K562 (cell line): ENCODE measurements at regions of chr18 and their contacts with region 1.

Region 1: GRCh38 chr18:10787293-10787901 is 261.6 kb downstream of the NAPG start:
- DNase-seq: peak; percentile 64 to 88 (median 68)
- ATAC-seq: peak; percentile 91
- H3K4me3 ChIP-seq: no peak overlapping the region
- H3K27ac ChIP-seq: no peak overlapping the region
- H3K4me1 ChIP-seq: no peaks in the 10 kb centered on the region; a peak in 1 of 5 replicates
- H3K27me3 ChIP-seq: no peaks in the 10 kb centered on the region
- CTCF ChIP-seq: peak; percentile 79 to 95 (median 91)
- EP300 ChIP-seq: no peak
- POLR2A ChIP-seq: no peak
- RAD21 ChIP-seq: peak; percentile 74 to 78

Region 2: GRCh38 chr18:10560450-10561045 is 226.8 kb before region 1 on chr18:
- CTCF ChIA-PET with region 1: interaction called, 4 read pairs
- POLR2A ChIA-PET with region 1: no interaction called
- in situ Hi-C with region 1: no loop called
- intact Hi-C with region 1: loop called (anchors 10 kb)
- DNase-seq: peak; percentile 73 to 85 (median 82)
- ATAC-seq: peak; percentile 89
- H3K4me3 ChIP-seq: no peak overlapping the region
- H3K27ac ChIP-seq: no peak overlapping the region
- H3K4me1 ChIP-seq: peaks cover 11 to 15% of the 10 kb centered on the region in 2 experiments
- H3K27me3 ChIP-seq: no peaks in the 10 kb centered on the region
- CTCF ChIP-seq: peak; percentile 79 to 87 (median 85)
- EP300 ChIP-seq: no peak
- POLR2A ChIP-seq: no peak
- RAD21 ChIP-seq: peak; percentile 90 to 95

Region 3: DNA sequence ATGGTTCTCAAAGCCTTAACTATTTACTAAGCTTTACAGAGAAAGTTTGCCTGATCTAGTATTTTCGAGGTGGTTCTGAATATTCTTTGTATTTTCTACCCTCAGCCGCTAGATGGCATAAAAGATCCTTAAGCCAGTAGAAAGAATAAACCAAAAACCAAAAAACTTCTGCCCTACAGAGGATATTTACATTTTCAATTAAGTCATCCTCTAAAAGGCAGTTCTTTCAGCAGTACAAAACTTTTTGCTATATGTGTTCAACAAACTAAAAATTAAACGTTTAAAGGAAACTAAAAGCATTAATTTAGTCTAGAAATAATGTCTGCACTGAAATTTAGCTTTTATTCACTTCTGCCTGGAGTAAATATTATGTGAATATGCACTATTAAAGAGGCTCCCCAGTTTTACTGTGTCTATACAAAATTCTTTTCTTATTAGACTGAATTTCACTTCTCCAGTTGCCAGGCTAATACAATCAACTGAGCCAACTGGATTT is 64.5 kb after region 1 on chr18:
- CTCF ChIA-PET with region 1: no interaction called
- POLR2A ChIA-PET with region 1: no interaction called
- in situ Hi-C with region 1: no loop called
- intact Hi-C with region 1: loop called (anchors 1 kb)
- DNase-seq: peak; percentile 44 to 70 (median 56)
- ATAC-seq: peak; percentile 69
- H3K4me3 ChIP-seq: no peak overlapping the region
- H3K27ac ChIP-seq: peak overlapping the region; percentile 6; the same call in 2 of the 3 replicates
- H3K4me1 ChIP-seq: no peaks in the 10 kb centered on the region
- H3K27me3 ChIP-seq: peaks cover 0 to 5% of the 10 kb centered on the region in 2 experiments; a peak in 1 of 5 replicates
- CTCF ChIP-seq: peak; percentile 61 to 89 (median 66); a peak in 5 of 6 replicates
- EP300 ChIP-seq: no peak; the same call in 1 of the 2 replicates
- POLR2A ChIP-seq: no peak
- RAD21 ChIP-seq: peak; percentile 84 to 90

Region 4: GRCh38 chr18:11040823-11041656 is 253.6 kb after region 1 on chr18:
- CTCF ChIA-PET with region 1: no interaction called
- POLR2A ChIA-PET with region 1: interaction called, 3 read pairs
- in situ Hi-C with region 1: no loop called
- intact Hi-C with region 1: loop called (anchors 5 kb)
- DNase-seq: peak; percentile 40 to 47 (median 42)
- ATAC-seq: peak; percentile 76
- H3K4me3 ChIP-seq: no peak overlapping the region
- H3K27ac ChIP-seq: no peak overlapping the region
- H3K4me1 ChIP-seq: no peaks in the 10 kb centered on the region
- H3K27me3 ChIP-seq: no peaks in the 10 kb centered on the region
- CTCF ChIP-seq: peak; percentile 54 to 69 (median 57)
- EP300 ChIP-seq: no peak
- POLR2A ChIP-seq: no peak
- RAD21 ChIP-seq: peak; percentile 37 to 50

Region 5: DNA sequence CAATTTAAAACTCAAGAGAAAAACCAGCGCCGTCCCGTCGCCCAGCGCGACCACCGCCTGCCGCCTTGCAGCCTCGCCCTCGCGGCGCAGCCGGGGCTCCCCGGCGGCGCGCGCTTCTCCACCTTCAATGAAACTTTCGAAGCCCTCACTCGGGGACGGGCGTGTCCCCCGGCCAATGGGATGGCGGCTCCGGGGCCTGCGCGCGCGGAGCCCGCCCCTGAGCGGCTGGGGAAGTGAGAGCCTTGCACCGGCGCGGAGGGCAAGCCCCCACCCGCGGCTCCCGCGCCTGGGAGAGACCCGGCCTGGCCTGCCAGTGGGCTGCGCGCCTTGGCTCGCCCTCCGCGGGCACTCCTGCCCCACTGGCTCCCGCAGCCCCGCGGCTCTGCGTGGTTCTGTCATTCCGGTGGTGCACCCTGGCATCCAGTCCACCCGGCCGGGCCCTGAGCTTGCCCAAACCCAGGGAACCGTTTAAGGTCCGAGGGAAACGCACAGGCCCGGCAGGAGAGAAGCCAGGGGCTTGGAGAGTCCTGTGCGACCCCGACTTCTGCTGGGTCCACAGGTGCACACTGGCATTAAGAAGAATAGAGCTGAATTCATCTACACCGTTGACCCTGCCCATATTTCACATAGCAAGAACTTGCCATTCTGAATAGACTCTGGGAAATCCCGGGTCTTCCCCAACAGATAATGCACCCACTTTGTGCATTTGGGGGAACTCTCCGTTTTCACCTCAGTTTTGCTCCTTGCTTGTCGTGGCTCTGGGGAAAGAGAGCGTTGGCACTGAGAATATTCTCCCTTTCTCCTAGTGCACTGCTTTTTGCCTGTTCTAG is 362.3 kb after region 1 on chr18 and contains the start of gene PIEZO2:
- CTCF ChIA-PET with region 1: no interaction called
- POLR2A ChIA-PET with region 1: no interaction called
- in situ Hi-C with region 1: no loop called
- intact Hi-C with region 1: loop called (anchors 5 kb)
- DNase-seq: peak; percentile 2 to 36 (median 26)
- ATAC-seq: peak; percentile 38; the same call in 1 of the 3 replicates
- H3K4me3 ChIP-seq: no peak within 1 kb of the TSS
- H3K27ac ChIP-seq: no peak within 1 kb of the TSS
- H3K4me1 ChIP-seq: peaks cover 0 to 4% of the 10 kb centered on the region in 2 experiments; a peak in 1 of 5 replicates
- H3K27me3 ChIP-seq: peaks cover 6 to 42% of the 10 kb centered on the region in 2 experiments; a peak in 4 of 5 replicates
- CTCF ChIP-seq: no peak
- EP300 ChIP-seq: no peak
- POLR2A ChIP-seq: no peak
- RAD21 ChIP-seq: no peak
- polyA plus RNA-seq, gene PIEZO2: 3.3 to 4.1 TPM